Activated CD4-positive, alpha-beta T cell treated with anti-CD3 and anti-CD28 coated beads, Interleukin-2, amount 10 ng/mL, durations not matched to agents 7 days and 5 days (primary cell): ENCODE measurements at regions of chr15 and their contacts with region 1.

Region 1: GRCh38 chr15:73922186-73923151 is 3.8 kb upstream of the LOXL1 start:
- DNase-seq: no peak
- H3K4me3 Mint-ChIP-seq: no peak overlapping the region
- H3K27ac Mint-ChIP-seq: peak overlapping the region; percentile 36
- H3K4me1 Mint-ChIP-seq: peaks cover 51% of the 10 kb centered on the region
- H3K27me3 Mint-ChIP-seq: peaks cover 3% of the 10 kb centered on the region

Region 2: DNA sequence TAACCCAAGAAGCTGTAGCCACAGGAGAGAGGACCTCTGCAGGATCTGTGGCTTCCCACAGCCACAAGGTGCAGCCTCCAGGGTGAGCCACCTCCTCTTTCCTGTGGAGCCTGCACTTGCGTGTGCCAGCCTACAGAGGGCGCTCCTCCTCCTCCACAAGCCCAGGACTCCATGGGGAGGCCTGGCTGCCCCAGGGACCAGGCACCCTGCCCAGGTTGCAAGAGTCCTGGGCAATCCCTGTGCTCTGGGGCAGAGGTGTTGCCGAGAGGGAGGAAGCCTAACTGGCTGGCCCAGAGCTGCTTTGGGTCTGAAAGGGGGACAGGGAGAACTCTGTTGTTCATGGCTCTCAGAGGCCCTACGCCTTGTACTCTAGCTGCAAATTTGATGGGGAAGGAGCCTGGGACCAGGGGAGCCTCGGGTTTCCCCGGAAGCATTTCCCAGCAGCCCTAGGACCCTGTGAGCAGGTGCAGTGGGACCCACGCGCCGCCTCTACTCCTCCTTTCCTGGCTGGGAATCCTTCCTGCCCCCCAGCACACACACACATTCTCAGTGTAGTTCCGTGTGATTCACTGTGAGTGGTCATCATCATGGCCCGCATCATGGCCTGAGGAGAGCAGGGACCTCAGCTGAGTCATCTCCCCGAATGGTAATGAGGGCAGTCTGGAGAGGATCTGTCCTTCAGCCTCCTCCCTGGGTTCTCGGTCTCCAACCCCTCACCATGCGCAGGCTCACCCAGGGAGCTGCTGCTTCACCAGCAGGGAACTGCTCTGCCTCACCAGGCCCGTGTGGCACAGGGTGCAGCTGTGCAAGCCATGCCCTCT is 24.8 kb before region 1 on chr15:
- CTCF ChIA-PET with region 1: interaction called, 17 read pairs
- POLR2A ChIA-PET with region 1: no interaction called
- DNase-seq: peak; percentile 75
- H3K4me3 Mint-ChIP-seq: no peak overlapping the region
- H3K27ac Mint-ChIP-seq: no peak overlapping the region
- H3K4me1 Mint-ChIP-seq: peaks cover 6% of the 10 kb centered on the region
- H3K27me3 Mint-ChIP-seq: peaks cover 2% of the 10 kb centered on the region